PC-9 (cell line): ENCODE measurements at regions of chr2 and their contacts with region 1.

Region 1: DNA sequence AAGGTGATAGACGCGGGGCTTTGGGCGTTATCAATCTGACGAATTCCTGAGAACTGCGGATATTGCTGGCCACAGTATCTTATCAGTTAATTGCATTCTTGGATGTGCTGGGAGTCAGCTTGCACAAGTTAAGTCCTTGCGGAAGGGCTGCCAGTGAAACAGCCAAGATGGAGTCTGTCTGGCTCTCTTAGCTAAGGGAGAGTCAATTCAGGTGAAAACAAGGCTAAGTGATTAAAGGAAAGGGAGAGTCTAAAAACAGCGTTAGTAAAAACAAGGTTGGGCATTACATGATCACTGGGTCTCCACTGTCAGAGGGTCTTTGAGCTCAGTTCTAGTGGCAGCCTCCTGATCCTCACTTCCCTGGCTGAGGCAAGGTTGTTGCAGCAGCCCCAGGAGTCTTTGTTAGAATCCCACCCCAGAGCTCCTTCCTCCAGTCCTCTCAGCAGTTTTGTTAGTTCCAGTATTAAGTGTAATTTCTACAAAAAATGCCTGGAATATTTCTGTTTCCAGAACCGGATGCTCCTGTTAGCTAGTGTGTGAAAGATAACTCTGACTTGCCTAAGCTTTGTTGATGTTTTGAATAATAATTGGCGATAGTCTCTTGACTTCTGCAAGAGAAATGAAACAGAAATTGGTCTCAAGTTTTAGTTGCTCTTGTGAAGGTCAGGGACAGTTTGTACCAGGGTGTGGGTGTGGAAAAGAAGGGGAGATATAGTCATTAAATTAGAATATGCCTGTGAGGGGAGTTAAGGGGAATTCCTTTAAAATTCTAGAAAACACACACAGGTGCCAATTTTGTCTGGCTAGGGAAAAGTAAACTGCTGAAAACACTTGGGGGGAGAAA is 10.6 kb downstream of the CFLAR start:
- DNase-seq: no peak
- H3K4me3 ChIP-seq: no peak overlapping the region
- H3K27ac ChIP-seq: peak overlapping the region; percentile 32
- H3K4me1 ChIP-seq: peaks cover 84% of the 10 kb centered on the region
- H3K27me3 ChIP-seq: no peaks in the 10 kb centered on the region
- CTCF ChIP-seq: no peak

Region 2: GRCh38 chr2:201021914-201022313 is 104.6 kb before region 1 on chr2:
- CTCF ChIA-PET with region 1: no interaction called
- POLR2A ChIA-PET with region 1: no interaction called
- intact Hi-C with region 1: no loop called
- DNase-seq: no peak
- H3K4me3 ChIP-seq: no peak overlapping the region
- H3K27ac ChIP-seq: no peak overlapping the region
- H3K4me1 ChIP-seq: no peaks in the 10 kb centered on the region
- H3K27me3 ChIP-seq: no peaks in the 10 kb centered on the region
- CTCF ChIP-seq: no peak

Region 3: DNA sequence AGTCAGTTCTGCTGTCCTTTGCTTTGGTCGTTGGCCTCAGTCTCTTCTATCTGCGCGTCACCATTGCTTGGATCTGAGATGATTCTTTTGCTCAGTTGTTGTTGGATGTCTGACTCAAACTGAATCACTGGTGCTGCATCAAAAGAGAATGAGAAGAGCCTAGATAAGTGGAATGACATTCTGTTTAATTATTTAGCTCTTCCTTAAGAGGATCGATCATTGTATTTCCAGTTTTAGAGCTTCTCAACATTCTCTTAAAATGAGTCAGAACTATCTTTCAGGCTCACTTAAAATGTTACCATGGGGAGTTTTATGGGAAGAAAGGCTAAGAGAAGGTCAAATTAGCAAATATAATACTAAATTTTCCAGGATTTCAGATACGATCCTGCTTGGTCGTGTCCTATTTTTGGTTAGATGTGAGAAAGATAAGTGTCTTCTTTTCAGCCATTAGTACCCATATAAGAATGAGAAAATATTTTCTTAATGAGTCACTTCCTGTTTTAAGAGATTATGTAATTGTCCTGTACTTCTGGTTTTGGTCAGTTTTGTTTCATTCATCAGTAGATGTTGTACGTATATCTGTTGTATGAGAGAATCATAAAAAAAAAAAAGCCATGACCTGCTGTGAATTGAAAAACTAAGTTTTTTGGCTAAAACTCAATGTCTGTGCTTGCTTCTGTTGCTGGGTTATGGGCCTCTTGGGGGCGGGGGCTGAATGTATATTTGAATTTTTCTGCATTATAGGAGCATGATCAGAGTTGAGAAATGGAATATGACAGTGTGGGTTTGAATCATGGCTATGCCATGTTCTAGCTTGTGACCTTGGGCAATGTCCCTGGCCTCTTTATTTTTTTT is 24.8 kb after region 1 on chr2:
- CTCF ChIA-PET with region 1: interaction called, 6 read pairs
- POLR2A ChIA-PET with region 1: interaction called, 3 read pairs
- intact Hi-C with region 1: loop called (anchors 1 kb)
- DNase-seq: peak in 1 of 2 experiments; percentile 87
- H3K4me3 ChIP-seq: peak overlapping the region; percentile 23; the same call in 1 of the 2 replicates
- H3K27ac ChIP-seq: peak overlapping the region; percentile 97
- H3K4me1 ChIP-seq: peaks cover 46% of the 10 kb centered on the region
- H3K27me3 ChIP-seq: no peaks in the 10 kb centered on the region
- CTCF ChIP-seq: no peak